Motor neuron (in vitro differentiated cells): ENCODE measurements at regions of chr5 and their contacts with region 1.

Region 1: DNA sequence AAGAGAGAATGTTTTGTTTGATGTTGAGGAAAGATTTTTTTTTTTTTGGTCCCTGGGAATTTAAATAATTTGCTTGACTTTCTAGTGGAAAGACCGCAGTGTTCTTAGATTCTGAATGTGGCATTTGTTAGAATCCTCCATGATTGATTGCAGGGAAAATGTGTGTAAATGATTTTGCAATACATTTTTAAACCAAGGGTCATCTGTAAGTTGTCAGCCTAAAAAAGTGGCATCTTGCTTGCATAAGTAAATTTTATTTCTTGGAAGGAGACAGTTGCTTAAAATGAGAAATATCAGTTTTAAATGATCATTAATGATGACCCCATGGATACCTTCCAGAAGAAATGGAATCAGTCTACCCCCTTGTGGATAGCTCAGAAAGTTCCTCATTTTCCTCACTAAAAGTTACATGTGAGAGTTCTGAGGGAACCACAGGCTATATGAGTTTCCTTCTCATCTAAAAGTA is 105.1 kb upstream of the SLC25A48 start:
- ATAC-seq: peak in 4 of 8 experiments; percentile 47 to 75 (median 58)
- H3K4me3 ChIP-seq: no peak overlapping the region
- H3K27ac ChIP-seq: no peak overlapping the region
- H3K4me1 ChIP-seq: peaks cover 0 to 7% of the 10 kb centered on the region in 2 donors

Region 2: DNA sequence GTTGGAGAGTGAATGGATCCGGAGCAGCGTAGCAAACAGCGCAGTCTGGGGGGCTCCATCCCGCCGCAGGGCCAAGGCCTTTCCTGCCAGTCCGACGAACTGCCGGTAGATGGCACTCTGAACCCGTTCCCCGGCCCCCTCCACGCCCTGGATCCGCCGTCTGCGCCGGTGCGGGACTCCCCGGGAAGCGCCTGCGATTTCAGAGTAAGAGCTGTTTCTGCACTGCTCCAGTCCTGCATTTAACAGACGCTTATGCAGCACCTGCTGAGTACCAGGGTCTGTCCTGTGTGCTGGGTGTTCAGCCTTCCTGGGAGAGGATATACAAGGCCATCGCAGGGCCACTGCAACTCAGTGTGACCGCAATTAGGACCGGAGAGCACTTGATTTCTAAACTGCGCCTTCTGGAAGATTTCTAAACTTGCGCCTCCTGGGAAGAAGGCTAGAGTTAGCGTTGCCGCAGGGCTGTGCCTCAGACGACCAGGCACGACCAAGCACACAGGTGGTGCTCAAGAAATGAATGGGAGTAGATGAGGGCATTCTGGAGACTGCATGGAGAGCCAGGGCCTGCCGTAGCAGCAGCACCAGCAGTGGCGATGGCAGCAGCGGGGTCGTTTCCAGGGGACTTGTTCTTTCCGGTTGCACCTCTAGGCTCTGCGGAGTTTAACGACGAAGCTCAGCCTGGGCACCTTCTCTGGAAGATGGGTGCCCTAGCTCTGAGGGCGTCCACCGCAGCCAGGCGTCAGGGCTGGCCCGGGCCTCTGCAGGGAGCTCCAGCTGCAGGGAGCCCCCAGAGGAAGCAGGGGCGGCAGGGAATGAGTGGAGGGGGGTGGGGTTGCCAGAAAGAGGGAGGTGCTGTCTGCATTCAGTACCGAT is 262.9 kb before region 1 on chr5:
- in situ Hi-C with region 1: loop called in 3 of 9 experiments (anchors 25 kb)
- ATAC-seq: peak; percentile 89 to 97 (median 93)
- H3K4me3 ChIP-seq: peak overlapping the region in 1 of 5 donors; percentile 18
- H3K27ac ChIP-seq: no peak overlapping the region
- H3K4me1 ChIP-seq: peaks cover 23 to 34% of the 10 kb centered on the region in 2 donors

Region 3: DNA sequence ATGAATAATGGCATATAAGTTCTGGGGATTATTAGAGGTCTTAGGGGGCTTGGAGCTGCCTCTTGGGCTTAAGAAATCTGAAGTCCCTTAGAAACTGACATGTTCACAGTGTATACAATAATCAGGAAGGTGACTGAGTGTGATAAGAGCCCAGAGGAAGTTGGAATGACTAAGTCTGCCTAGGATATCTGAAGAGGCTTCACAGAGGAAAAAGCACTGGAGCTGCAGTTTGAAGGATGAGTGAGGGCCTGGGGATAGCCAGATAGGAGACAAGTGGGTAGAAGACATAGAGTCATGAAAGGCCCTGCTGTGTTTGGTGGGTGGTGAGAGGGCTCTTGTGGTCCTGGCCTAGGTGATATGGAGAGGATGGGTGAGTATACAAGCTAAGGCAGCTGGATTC is 202.4 kb before region 1 on chr5:
- in situ Hi-C with region 1: no loop called
- ATAC-seq: no peak
- H3K4me3 ChIP-seq: no peak overlapping the region
- H3K27ac ChIP-seq: no peak overlapping the region
- H3K4me1 ChIP-seq: no peaks in the 10 kb centered on the region

Region 4: DNA sequence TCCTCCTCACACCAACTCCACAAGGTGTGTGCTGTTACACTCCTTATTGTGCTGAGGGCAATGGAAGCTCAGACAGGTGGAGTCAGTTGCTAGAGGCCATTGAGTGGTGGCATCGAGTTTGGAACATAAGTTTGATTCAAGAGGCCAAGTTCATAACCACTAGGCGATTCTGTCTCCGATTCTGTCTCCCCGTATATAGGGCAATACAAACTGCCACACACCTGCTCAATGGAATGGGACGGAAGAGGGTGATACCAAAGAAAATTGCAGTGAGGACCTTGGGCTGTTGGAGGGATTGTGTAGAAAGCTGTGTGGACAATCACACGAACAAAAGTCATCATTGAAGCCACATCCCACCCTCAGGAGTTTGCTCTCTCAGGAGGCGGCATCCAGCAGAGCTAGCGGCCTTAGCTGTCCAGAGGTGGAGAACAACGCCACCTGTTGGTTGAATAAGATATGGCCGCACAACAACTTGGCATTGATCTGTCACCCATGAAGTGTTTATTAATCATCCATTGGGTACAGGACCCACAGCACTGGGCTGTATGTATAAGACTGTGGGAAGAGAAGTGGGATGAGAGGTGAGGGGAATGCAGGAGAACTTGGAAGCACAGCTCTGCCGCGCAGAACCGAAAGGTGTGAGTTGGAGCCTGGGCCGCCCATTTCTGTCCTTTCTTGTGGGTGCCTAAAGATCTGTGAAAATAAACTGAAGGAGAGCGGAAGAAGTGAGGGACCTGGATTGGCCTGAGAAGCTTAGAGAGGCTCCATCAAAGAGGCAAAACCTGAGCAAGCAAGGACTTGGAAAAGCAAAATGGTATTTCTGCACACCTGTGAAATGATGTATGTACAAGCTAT is 177.5 kb before region 1 on chr5:
- in situ Hi-C with region 1: loop called in 5 of 9 experiments (anchors 10 to 25 kb)
- ATAC-seq: peak; percentile 80 to 93 (median 88)
- H3K4me3 ChIP-seq: no peak overlapping the region
- H3K27ac ChIP-seq: no peak overlapping the region
- H3K4me1 ChIP-seq: peaks cover 3 to 5% of the 10 kb centered on the region in 2 donors

Region 5: GRCh38 chr5:135560858-135561257 is 168.5 kb before region 1 on chr5:
- in situ Hi-C with region 1: loop called in 7 of 9 experiments (anchors 10 to 25 kb)
- ATAC-seq: peak; percentile 82 to 99 (median 92)
- H3K4me3 ChIP-seq: no peak overlapping the region
- H3K27ac ChIP-seq: no peak overlapping the region
- H3K4me1 ChIP-seq: peaks cover 15 to 17% of the 10 kb centered on the region in 2 donors

Region 6: DNA sequence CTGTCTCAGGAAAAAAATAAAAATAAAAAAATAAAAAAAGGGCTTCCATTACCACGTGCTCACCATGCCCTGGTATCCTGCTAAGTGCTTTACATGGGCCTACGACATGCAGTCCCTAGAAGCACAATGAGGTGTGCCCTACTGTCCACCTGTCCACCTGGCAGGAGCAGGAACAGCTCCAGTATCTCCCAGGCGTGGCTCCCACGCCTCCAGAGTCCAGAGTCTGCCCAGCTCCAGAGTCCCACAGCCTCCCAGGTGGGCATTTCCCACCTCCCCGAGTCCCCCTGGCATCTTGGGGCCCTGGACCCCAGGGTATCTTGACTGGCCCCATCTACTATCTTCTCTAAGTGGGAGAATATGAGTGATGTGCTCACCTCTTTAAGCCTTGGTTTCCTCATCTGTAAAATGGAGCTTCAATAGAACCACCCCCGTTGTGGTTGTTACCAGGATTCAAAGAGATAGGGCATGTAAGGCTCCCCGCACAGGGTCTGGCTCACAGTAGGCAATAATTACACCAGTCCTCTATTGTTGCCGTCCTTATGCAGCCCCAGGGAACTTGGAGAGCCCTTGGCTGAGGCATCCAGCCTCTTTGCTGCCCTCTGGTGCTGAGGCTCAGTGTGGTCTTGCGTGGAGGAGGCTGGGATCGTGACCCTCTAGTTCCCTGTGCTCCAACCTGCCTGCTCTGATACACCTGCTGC is 159.4 kb before region 1 on chr5:
- in situ Hi-C with region 1: loop called in 7 of 9 experiments (anchors 10 to 25 kb)
- ATAC-seq: peak in 7 of 8 experiments; percentile 16 to 77 (median 38)
- H3K4me3 ChIP-seq: no peak overlapping the region
- H3K27ac ChIP-seq: no peak overlapping the region
- H3K4me1 ChIP-seq: peaks cover 12 to 13% of the 10 kb centered on the region in 2 donors

Region 7: GRCh38 chr5:135810188-135810943 is 81.0 kb after region 1 on chr5:
- in situ Hi-C with region 1: no loop called
- ATAC-seq: no peak
- H3K4me3 ChIP-seq: no peak overlapping the region
- H3K27ac ChIP-seq: no peak overlapping the region
- H3K4me1 ChIP-seq: no peaks in the 10 kb centered on the region

Region 8: DNA sequence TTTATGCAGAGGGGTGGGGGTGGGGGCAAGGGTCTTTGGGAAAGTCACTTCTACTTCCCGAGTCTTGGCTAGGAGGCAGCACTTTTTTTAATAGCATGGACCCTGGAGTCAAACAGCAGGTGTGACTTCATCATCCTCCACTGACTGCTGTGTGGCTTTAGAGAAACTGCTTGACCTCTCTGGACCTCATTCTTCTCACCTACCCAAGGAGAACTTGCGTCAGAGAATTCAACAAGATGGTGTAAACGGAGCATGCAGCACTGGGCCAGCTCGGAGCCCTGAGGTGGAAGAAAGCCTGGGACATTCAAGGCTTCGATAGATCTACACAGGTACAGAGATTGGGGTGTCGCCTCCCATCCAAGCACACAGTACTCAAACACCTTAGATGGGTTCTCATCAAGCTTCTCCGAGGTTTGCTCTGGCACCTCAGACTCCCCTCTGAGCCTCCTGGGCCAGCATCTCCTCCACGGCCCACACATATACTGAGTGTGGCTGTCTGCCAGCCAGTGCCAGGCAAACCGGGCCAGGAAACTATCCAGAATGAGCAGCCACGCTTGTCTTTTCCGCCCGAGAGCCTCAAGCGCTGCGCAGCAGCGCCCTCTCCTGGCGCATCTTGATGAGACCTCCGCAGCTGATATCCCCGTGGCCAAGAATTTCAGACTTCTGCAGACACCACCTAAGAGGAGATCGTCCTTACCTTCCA is 100.5 kb after region 1 on chr5:
- in situ Hi-C with region 1: loop called in 1 of 9 experiments (anchors 25 kb)
- ATAC-seq: peak; percentile 57 to 69 (median 62)
- H3K4me3 ChIP-seq: no peak overlapping the region
- H3K27ac ChIP-seq: no peak overlapping the region
- H3K4me1 ChIP-seq: no peaks in the 10 kb centered on the region

Region 9: GRCh38 chr5:136020383-136021015 is 291.1 kb after region 1 on chr5:
- in situ Hi-C with region 1: no loop called
- ATAC-seq: peak in 3 of 8 experiments; percentile 19 to 70 (median 65)
- H3K4me3 ChIP-seq: no peak overlapping the region
- H3K27ac ChIP-seq: no peak overlapping the region
- H3K4me1 ChIP-seq: no peaks in the 10 kb centered on the region